Lower leg skin (tissue), 4 donors: ENCODE measurements at regions of chr5 and their contacts with region 1.

Region 1: GRCh38 chr5:149381987-149382340 is 2.9 kb upstream of the IL17B start:
- DNase-seq: peak; percentile 68 to 95
- H3K4me3 ChIP-seq: no peak overlapping the region
- CTCF ChIP-seq: peak in 1 of 3 donors; percentile 68
- POLR2A ChIP-seq: no peak

Region 2: GRCh38 chr5:149434162-149435014 is 52.4 kb after region 1 on chr5:
- intact Hi-C with region 1: loop called (anchors 5 kb)
- DNase-seq: peak in 1 of 2 donors; percentile 59
- H3K4me3 ChIP-seq: no peak overlapping the region
- CTCF ChIP-seq: no peak
- POLR2A ChIP-seq: no peak

Region 3: GRCh38 chr5:149448831-149449714 is 67.1 kb after region 1 on chr5:
- intact Hi-C with region 1: no loop called
- DNase-seq: no peak
- H3K4me3 ChIP-seq: no peak overlapping the region
- CTCF ChIP-seq: no peak
- POLR2A ChIP-seq: no peak

Region 4: DNA sequence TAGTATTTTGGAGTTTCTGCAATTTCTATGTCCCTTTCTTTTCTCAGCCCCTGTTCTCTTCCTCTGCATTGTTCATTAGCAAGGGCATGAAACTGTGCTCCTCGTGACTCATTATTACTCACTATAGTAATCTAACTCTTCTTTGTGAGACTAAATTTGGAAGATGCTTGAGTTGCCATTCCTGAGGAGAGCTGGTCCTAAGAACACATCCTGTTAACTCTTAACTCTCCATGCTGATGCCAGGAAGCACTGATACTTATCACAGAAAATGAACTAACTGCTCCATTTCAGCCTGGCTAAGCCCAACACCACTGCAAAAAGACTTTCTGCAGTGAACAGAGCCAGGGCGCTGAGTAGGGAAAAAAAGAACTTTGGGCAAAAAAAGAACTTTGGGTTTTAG is 179.9 kb after region 1 on chr5:
- intact Hi-C with region 1: loop called (anchors 10 kb)
- DNase-seq: no peak
- H3K4me3 ChIP-seq: no peak overlapping the region
- CTCF ChIP-seq: no peak
- POLR2A ChIP-seq: no peak

Region 5: DNA sequence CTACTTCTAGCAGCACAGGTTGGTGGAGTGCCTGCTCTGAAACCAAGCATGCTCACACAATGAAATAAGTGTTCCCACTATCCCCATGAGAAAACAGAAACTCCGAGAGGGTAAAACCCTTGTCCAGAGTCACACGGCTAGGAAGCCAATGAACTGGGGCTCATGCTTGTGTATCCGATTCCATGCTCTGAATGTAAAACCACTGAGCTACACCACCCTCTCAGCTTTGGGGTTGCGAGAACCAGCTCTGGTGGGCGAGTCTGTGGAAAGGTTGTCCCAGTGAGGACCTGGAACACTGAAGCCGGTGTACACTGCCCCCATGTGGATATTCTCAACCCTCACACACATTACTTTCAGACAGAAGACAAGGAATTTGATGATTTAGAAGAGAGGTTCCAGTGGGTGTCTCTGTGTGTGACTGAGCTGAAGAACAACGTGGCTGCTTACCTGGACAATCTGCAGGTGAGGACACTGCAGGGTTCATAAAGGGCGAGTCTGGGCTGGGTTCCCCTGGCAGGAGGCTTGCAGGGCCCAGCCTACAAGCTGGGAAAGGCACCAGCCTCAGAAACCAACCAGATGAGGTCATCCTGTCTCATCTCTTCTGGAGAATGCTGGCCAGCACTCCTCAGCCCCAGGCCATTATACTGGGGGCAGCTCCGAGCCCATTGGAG is 236.8 kb after region 1 on chr5:
- intact Hi-C with region 1: loop called (anchors 5 kb)
- DNase-seq: no peak
- H3K4me3 ChIP-seq: no peak overlapping the region
- CTCF ChIP-seq: no peak
- POLR2A ChIP-seq: no peak